Heart right ventricle (tissue), 16 donors: ENCODE measurements at regions of chr1 and their contacts with region 1.

Region 1: DNA sequence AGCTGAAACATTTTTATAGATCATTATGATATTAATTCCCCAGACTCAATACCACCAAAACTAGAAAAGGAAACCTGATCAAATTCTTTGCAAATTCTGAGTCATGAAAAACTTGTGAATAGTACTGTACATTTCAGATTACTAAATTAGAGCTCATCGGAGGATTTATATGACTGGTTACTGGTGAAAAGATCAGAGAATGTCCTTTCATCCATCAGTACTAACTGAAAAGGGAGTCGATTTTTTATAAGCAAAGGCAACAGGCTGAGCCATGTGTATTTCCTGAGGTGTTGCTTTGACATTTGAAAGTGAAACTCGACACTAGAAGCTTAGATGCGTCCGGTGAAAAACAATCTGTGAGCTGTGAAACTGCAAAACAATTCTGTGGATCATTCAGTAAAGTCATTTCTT is 155.7 kb downstream of the TNFSF18 start:
- DNase-seq: no peak
- ATAC-seq: peak in 3 of 8 donors; percentile 48 to 74 (median 56)
- H3K4me3 ChIP-seq: peak overlapping the region in 2 of 10 donors; percentile 2 to 12
- H3K27ac ChIP-seq: peak overlapping the region in 4 of 10 donors; percentile 8 to 56 (median 32)
- H3K4me1 ChIP-seq: peaks cover 0 to 34% (median 16%) of the 10 kb centered on the region in 9 donors
- H3K27me3 ChIP-seq: no peaks in the 10 kb centered on the region
- CTCF ChIP-seq: no peak

Region 2: GRCh38 chr1:172931761-172932160 is 36.7 kb after region 1 on chr1:
- intact Hi-C with region 1: loop called in 1 of 10 experiments (anchors 5 kb)
- DNase-seq: no peak
- ATAC-seq: no peak
- H3K4me3 ChIP-seq: no peak overlapping the region
- H3K27ac ChIP-seq: no peak overlapping the region
- H3K4me1 ChIP-seq: peaks cover 0 to 42% (median 14%) of the 10 kb centered on the region in 9 donors
- H3K27me3 ChIP-seq: no peaks in the 10 kb centered on the region
- CTCF ChIP-seq: no peak